ENCODE measurements at regions of chr17 and their contacts with region 1.

Region 1: GRCh38 chr17:48878918-48879898 is 13.4 kb upstream of the ATP5MC1 start:
- DNase-seq: peak in 1 of 6 donors; percentile 63
- ATAC-seq: peak; percentile 79 to 99 (median 95)
- H3K4me3 ChIP-seq: no peak overlapping the region
- H3K27ac ChIP-seq: no peak overlapping the region
- H3K4me1 ChIP-seq: no peaks in the 10 kb centered on the region
- H3K27me3 ChIP-seq: no peaks in the 10 kb centered on the region
- CTCF ChIP-seq: peak; percentile 84 to 90 (median 88)

Region 2: DNA sequence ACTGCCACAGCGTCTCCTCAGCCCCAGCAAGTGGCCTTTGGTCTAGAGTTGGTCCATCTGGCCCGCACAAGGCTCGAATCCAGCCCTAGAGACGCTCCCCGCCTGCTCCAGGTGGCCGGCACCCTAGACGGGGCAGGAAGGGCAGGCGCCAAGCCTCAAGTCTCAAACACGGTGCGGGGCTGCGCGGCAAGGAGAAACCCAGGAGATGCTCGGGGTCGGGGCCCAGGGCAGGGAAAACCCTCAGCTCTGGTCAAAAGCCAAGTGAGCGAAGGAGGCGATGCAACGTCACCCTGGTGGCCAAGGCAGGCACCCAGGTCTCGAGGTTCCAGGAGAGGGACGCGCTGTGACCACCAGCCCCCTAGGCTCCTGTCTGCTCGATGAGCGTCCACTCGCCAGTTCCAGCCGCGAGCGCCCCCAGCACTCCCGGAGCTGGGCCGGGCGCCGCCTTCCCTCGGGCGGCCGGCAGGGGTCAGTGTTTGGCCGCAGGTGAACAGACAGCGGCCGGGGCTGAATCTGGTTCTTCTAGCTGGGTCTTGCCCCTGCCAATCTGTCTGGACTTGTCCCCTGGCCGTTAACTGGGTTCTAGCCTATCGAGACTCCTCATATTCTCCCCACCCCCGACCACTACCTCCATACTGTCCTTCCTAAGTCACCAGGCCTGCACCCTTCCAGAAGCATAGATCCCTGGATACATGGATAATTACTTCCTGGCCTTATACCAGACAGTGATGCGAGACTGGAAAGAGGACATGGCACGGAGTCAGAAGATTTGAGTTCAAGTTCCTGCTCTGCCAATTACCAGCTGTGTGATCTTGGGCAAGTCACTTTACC is 200.9 kb before region 1 on chr17:
- intact Hi-C with region 1: loop called in 2 of 3 experiments (anchors 5 to 10 kb)
- DNase-seq: peak; percentile 36 to 93 (median 74)
- ATAC-seq: peak; percentile 85 to 100 (median 98)
- H3K4me3 ChIP-seq: peak overlapping the region in 1 of 4 donors; percentile 2
- H3K27ac ChIP-seq: no peak overlapping the region
- H3K4me1 ChIP-seq: no peaks in the 10 kb centered on the region
- H3K27me3 ChIP-seq: peaks cover 0 to 9% (median 3%) of the 10 kb centered on the region in 4 donors
- CTCF ChIP-seq: peak; percentile 89 to 96 (median 94)

Region 3: GRCh38 chr17:48724251-48725003 is 154.8 kb before region 1 on chr17:
- intact Hi-C with region 1: loop called in 2 of 3 experiments (anchors 10 kb)
- DNase-seq: peak; percentile 72 to 95 (median 86)
- ATAC-seq: peak; percentile 82 to 94 (median 92)
- H3K4me3 ChIP-seq: no peak overlapping the region
- H3K27ac ChIP-seq: no peak overlapping the region
- H3K4me1 ChIP-seq: peaks cover 0 to 5% (median 0%) of the 10 kb centered on the region in 3 donors
- H3K27me3 ChIP-seq: peaks cover 8 to 81% (median 26%) of the 10 kb centered on the region in 4 donors
- CTCF ChIP-seq: peak in 3 of 4 donors; percentile 61

Region 4: GRCh38 chr17:48804925-48805411 is 74.2 kb before region 1 on chr17:
- intact Hi-C with region 1: loop called in 2 of 3 experiments (anchors 5 kb)
- DNase-seq: peak; percentile 25 to 83 (median 66)
- ATAC-seq: peak; percentile 84 to 95 (median 93)
- H3K4me3 ChIP-seq: no peak overlapping the region
- H3K27ac ChIP-seq: peak overlapping the region in 1 of 4 donors; percentile 3
- H3K4me1 ChIP-seq: no peaks in the 10 kb centered on the region
- H3K27me3 ChIP-seq: no peaks in the 10 kb centered on the region
- CTCF ChIP-seq: peak; percentile 86 to 91 (median 87)

Region 5: DNA sequence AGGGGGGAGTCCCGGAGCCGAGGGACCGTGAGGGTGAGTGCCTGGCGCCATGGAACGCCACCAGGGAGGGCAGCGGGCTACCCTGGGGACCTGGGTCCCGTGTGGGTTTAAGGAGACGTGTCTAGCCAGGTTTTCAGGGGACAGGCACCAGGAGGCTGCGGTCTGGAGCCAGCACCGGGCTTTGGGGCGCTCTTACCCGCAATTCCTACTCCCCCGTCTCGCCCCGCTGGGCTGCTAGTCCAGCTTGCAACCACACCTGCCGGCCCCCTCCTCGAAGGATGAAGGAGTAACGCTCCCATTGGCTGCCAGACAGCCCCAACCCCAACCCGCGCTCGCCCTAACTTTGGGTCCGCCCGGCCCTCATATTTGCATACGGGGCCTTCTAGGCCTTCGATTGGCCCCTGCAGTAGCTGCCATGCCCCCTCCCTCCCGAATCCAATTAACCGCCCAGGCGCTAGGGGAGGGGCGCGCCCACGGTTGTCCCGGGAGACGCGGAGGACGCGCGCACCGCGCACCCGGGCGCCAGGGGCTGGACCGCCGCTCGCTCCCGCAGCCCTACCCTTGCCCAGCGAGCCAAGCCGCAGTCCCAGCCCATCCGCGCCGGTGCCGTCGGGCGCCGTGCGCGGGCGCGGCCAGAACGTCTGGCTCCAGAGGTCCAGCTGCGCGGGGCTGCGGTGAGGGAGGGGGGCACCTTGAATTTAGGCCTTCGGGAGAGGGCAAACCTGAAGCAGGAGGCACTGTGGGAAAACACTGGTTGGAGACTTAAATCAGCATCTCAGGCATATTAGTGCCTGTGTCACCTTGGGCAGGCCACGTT is 62.2 kb before region 1 on chr17 and contains the start of gene TTLL6:
- intact Hi-C with region 1: loop called in 1 of 3 experiments (anchors 5 kb)
- DNase-seq: peak; percentile 73 to 86 (median 80)
- ATAC-seq: peak; percentile 91 to 98 (median 96)
- H3K4me3 ChIP-seq: peak within 1 kb of the TSS in 3 of 4 donors; percentile 26 to 41 (median 30)
- H3K27ac ChIP-seq: no peak within 1 kb of the TSS
- H3K4me1 ChIP-seq: peaks cover 0 to 4% (median 0%) of the 10 kb centered on the region in 3 donors
- H3K27me3 ChIP-seq: peaks cover 0 to 8% (median 0%) of the 10 kb centered on the region in 4 donors
- CTCF ChIP-seq: no peak
- total RNA-seq, gene TTLL6: 0.40 to 0.98 (median 0.67) TPM

Region 6: DNA sequence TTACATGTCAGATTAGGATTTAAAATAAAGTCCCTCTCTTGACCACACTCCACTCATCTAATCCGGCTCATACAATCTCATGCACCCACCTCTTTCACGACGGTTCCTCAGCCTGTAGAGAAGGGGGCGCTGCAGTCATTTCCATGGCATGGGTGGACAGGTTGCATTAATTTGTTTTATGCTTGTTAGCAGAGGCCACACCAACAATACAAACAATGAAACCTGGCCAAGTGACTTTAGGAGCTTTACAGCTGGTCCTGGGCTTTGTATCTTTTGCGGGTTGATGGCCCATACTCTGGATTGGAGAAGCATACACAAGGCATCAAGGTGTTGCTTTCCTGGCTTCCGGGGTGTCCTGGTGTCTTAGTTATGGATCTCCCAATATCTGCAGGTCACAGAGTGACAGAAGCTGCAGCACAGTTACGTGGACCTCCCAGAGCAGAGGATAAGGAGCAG is 75.1 kb after region 1 on chr17:
- intact Hi-C with region 1: no loop called
- DNase-seq: no peak
- ATAC-seq: no peak
- H3K4me3 ChIP-seq: no peak overlapping the region
- H3K27ac ChIP-seq: no peak overlapping the region
- H3K4me1 ChIP-seq: no peaks in the 10 kb centered on the region
- H3K27me3 ChIP-seq: no peaks in the 10 kb centered on the region
- CTCF ChIP-seq: no peak

Region 7: GRCh38 chr17:49031965-49032928 is 153.0 kb after region 1 on chr17:
- intact Hi-C with region 1: no loop called
- DNase-seq: peak in 3 of 6 donors; percentile 23 to 55 (median 33)
- ATAC-seq: peak; percentile 89 to 95 (median 90)
- H3K4me3 ChIP-seq: no peak overlapping the region
- H3K27ac ChIP-seq: no peak overlapping the region
- H3K4me1 ChIP-seq: no peaks in the 10 kb centered on the region
- H3K27me3 ChIP-seq: peaks cover 0 to 6% (median 0%) of the 10 kb centered on the region in 4 donors
- CTCF ChIP-seq: peak; percentile 52 to 78 (median 60)